Heart right ventricle (tissue), 16 donors: ENCODE measurements at regions of chr3 and their contacts with region 1.

Region 1: GRCh38 chr3:135178566-135178965 is 383.5 kb downstream of the EPHB1 start:
- DNase-seq: no peak
- ATAC-seq: no peak
- H3K4me3 ChIP-seq: no peak overlapping the region
- H3K27ac ChIP-seq: no peak overlapping the region
- H3K4me1 ChIP-seq: peaks cover 0 to 4% (median 0%) of the 10 kb centered on the region in 9 donors
- H3K27me3 ChIP-seq: no peaks in the 10 kb centered on the region
- CTCF ChIP-seq: no peak

Region 2: GRCh38 chr3:135136361-135137100 is 42.0 kb before region 1 on chr3:
- intact Hi-C with region 1: loop called in 1 of 10 experiments (anchors 2 kb)
- DNase-seq: no peak
- ATAC-seq: no peak
- H3K4me3 ChIP-seq: no peak overlapping the region
- H3K27ac ChIP-seq: no peak overlapping the region
- H3K4me1 ChIP-seq: no peaks in the 10 kb centered on the region
- H3K27me3 ChIP-seq: no peaks in the 10 kb centered on the region
- CTCF ChIP-seq: no peak